Dorsolateral prefrontal cortex (tissue), 120 donors: ENCODE measurements at regions of chr10 and their contacts with region 1.

Region 1: DNA sequence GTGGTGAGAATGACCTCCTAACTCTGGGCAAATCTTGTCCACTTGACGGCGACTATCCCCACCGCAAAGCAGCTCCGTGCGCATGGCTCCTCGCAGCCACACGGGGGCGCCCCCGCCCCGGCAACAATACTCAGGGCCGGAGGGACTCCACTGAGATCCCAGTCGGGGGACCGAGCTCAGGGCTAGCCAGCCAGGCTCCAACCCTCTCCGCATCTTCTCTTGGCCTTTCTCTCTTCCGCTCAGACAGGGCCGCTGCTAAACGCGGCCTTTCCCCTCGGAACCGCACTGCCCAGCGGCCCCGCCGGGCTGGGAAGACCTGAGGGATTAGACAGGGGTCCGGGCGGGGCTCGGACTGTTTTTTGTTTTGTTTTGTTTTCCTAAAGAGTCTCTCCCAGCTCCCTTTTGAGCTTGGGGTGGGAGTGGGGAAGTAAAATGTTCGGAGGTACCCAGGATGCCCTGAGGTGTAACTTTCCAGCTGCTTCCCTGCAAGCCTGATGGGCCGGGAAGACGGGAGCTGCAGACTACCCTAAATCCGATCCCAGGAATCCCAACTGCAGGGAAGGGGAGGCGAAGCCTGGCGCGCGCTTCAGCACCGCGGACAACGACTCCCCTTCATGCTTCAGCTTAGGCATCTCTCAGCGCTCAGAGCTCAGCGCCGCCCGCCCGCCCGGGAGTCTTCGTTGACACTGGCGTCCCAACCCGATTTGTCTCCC is 2.7 kb downstream of the KCNIP2 start:
- DNase-seq: peak; percentile 71 to 93 (median 85)
- H3K4me3 ChIP-seq: peak overlapping the region; percentile 36 to 77 (median 60)
- H3K27ac ChIP-seq: peak overlapping the region in 41 of 59 donors; percentile 5 to 82 (median 53)
- H3K27me3 ChIP-seq: no peaks in the 10 kb centered on the region
- CTCF ChIP-seq: peak; percentile 70 to 98 (median 94)

Region 2: GRCh38 chr10:99993701-99994689 is 1846.9 kb before region 1 on chr10:
- intact Hi-C with region 1: no loop called
- DNase-seq: peak in 2 of 10 donors; percentile 32 to 36
- H3K4me3 ChIP-seq: peak overlapping the region in 1 of 59 donors; percentile 1
- H3K27ac ChIP-seq: peak overlapping the region in 2 of 59 donors; percentile 37 to 41
- H3K27me3 ChIP-seq: no peaks in the 10 kb centered on the region
- CTCF ChIP-seq: no peak

Region 3: DNA sequence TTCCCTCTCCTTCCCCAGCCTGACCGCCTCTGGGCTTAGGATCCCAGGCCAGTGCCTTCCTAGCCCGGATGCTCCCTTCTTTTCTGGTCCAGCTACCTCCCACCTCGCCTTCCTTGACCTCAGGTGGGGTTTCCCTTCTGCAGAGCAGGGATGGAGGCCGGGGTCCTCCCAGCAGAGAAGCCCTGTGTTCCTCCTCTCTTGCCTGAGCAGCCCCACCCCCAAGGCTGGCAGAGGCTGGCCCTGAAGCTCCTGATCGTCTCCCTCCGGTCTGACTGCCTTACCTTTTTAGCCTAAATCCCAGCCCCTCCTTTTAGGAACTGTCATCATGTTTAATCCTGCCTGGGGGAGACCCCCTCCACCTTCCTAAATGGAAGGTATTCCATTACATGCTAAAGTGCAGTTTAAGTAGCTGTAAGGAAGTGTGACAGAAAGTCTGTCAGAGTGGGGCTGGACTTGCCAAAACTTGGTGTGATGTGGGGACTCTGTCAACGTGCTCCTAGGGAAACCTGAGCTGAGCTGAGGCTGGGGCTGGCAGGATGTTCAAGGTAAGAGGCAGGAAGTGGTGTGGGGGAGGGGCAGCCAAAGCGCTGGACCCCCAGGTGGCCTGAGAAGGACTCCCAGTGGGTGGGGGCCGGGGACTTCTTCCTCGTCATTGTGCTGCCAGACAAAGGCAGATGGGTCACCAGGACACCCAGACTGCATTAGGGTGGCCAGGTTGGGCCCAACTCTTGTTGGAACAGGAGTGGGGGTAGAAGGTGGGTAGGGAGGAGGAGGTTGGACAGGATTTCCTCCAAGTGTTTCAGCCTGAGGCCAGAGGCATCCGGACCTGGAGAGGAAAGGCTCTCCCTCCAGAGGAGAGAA is 651.1 kb before region 1 on chr10:
- intact Hi-C with region 1: no loop called
- DNase-seq: no peak
- H3K4me3 ChIP-seq: no peak overlapping the region
- H3K27ac ChIP-seq: no peak overlapping the region
- H3K27me3 ChIP-seq: peaks cover 0 to 21% (median 0%) of the 10 kb centered on the region in 45 donors
- CTCF ChIP-seq: no peak

Region 4: GRCh38 chr10:101512738-101513137 is 328.2 kb before region 1 on chr10:
- intact Hi-C with region 1: no loop called
- DNase-seq: no peak
- H3K4me3 ChIP-seq: no peak overlapping the region
- H3K27ac ChIP-seq: no peak overlapping the region
- H3K27me3 ChIP-seq: no peaks in the 10 kb centered on the region
- CTCF ChIP-seq: no peak

Region 5: DNA sequence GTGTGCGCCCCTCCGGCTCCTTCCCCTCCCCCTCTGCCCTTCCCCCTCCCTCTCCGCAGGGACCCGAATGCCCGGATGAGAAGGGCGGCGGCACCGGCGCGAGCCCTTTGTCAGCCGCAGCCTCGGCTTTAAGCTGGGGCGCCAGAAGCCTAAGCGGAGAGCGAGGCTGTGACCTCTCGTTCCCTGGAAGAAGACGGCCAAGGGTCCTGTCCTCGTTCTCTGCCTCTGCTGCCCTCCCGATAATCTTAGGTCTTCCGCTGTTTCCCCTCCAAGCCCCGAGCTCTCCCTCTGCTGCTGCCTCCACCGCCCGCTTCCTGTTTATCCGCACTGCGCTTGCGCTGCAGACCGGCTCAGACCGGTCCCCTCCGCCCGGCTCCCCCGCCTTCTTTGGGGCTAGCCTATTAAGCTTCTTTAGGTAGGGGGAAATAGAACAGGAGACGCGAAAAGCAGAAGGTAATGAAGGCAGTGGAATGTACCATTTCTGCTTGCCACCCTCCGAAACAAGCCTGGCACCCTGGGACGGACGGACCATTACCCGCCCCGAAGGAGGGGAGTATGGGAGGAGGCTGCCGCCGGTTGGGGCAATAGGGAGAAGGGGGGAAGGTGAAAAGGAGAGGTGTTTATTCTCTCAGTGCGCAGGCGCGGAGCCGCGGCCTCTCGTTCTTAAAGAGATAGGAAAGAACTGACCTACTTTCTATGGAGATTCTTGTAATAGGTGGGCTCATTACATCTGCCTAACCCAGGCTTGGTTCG is 22.6 kb before region 1 on chr10 and contains the start of gene OGA:
- intact Hi-C with region 1: loop called in 1 of 2 experiments (anchors 1 kb)
- DNase-seq: peak; percentile 93 to 99 (median 97)
- H3K4me3 ChIP-seq: peak within 1 kb of the TSS; percentile 61 to 100 (median 99)
- H3K27ac ChIP-seq: peak within 1 kb of the TSS; percentile 68 to 100 (median 97)
- H3K27me3 ChIP-seq: no peaks in the 10 kb centered on the region
- CTCF ChIP-seq: peak in 10 of 56 donors; percentile 0 to 31 (median 8)
- total RNA-seq, gene OGA: 163 to 362 (median 249) TPM

Region 6: DNA sequence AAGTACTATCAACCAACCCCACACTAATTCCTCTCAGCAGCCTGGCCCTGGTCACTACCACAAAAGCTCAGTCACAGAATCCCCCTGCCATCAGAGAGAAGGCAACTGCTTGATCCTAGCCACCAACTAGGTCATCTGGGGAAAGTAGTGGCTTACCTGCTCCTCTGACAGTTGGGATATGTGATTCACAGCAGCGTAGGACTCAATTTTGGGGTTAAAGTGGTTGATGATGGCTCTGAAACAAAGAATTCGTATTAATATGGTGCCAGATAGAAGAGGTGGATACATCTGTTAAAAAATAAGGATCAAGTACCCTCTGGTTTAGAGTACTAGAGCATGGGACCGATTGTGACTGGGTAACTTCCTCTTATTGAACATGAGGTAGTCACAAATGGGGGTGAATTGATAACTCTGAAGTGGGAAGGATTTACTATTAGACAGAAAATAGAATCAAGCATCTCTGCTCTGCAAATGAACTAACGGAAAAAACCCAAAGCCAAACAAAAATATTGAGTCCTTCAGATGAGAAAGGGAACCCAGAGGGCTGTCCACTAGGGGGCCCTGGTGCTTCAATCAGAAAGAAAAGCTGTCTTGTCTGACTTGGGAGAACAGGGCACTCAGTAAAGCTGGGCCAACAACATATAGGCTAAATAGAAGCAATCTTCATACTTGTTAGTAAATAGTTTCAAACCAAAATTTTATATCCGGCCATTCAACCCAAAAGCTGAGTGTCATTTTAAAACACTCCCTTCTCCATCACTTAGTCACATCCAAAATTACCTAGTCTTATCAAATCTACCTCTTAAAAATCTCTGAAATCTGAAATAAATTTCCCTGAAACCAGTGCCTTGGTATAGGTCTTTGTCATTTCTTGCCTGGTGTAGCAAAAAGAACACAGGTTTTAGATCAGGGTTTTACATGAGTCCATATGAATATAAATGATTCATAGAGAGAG is 48.6 kb after region 1 on chr10:
- intact Hi-C with region 1: loop called (anchors 2 to 5 kb)
- DNase-seq: peak; percentile 69 to 95 (median 85)
- H3K4me3 ChIP-seq: no peak overlapping the region
- H3K27ac ChIP-seq: peak overlapping the region in 49 of 59 donors; percentile 0 to 78 (median 50)
- H3K27me3 ChIP-seq: no peaks in the 10 kb centered on the region
- CTCF ChIP-seq: peak; percentile 67 to 91 (median 85)

Region 7: GRCh38 chr10:102009801-102010425 is 169.0 kb after region 1 on chr10:
- intact Hi-C with region 1: loop called (anchors 1 to 2 kb)
- DNase-seq: peak in 3 of 10 donors; percentile 34 to 60 (median 58)
- H3K4me3 ChIP-seq: no peak overlapping the region
- H3K27ac ChIP-seq: peak overlapping the region in 1 of 59 donors; percentile 13
- H3K27me3 ChIP-seq: no peaks in the 10 kb centered on the region
- CTCF ChIP-seq: peak; percentile 77 to 95 (median 88)

Region 8: DNA sequence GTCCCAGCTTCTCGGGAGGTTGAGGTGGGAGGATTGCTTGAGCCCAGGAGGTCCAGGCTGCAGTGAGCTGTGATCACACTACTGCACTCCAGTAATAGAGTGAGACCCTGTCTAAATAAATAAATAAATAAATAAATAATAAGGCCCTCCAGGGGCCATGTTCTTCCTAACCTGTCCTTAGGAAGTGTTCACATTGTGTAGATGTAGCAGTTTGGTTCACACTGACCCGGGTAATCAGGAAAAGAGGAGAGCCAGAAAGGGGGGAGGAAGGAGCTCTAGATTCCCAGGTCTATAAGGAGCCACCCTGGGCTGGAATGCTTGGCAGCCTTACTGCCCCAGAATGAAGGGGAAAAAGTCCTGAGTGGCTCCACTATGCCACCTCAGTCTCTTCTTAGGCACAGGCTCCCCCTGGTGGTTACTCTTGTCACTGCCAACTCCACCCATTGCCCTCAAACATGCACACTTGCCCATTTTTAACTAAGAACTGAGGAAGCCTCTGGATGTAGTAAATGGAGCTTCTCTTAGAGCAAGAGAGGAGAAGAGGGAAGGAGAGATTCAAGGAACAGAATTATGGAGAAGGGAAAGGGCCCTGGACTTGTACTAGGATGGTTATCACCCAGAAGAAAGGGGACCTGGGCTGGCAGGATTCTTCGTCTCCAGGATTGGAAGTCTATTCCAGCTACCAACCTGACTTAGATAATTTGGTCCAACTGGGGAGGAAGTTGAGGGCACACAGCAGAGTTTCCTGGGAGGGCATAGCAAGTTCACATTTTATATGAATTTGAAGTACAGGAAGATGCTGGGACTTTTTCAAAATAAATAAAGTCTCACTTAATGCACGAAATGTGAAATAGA is 232.0 kb after region 1 on chr10:
- intact Hi-C with region 1: loop called (anchors 2 to 5 kb)
- DNase-seq: peak; percentile 71 to 91 (median 82)
- H3K4me3 ChIP-seq: no peak overlapping the region
- H3K27ac ChIP-seq: no peak overlapping the region
- H3K27me3 ChIP-seq: no peaks in the 10 kb centered on the region
- CTCF ChIP-seq: peak; percentile 78 to 97 (median 93)